GM18951 (cell line): ENCODE measurements at regions of chr17 and their contacts with region 1.

Region 1: GRCh38 chr17:21756856-21757619 is 64.7 kb downstream of the KCNJ18 start:
- POLR2A ChIP-seq: no peak

Region 2: GRCh38 chr17:21318439-21318838 is 438.6 kb before region 1 on chr17:
- in situ Hi-C with region 1: loop called (anchors 5 kb)
- POLR2A ChIP-seq: no peak

Region 3: DNA sequence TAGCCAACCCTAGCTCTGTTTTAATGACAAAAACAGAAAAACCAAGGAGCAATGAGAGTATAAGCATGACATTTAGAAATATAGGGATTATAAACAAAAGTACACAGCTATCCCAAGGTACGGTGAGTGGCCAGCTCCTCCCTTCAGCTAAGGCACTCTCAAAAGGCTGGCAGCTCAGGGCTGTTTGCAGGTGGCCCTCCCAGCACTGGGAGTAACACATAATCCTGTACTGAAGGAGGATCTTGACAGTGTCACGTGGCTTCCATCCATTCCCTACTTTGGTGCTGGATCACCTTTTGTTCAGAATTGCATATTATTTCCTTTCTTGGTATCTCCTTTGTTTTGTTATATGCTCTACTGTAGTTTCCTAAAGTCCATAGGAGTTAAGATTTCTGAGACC is 436.1 kb after region 1 on chr17:
- in situ Hi-C with region 1: no loop called
- POLR2A ChIP-seq: no peak